ENCODE measurements at regions of chr7 and their contacts with region 1.

Region 1: GRCh38 chr7:150404805-150405583 is 25.9 kb downstream of the ZNF775 start:
- DNase-seq: peak; percentile 93
- ATAC-seq: peak; percentile 50
- H3K4me3 ChIP-seq: peak overlapping the region; percentile 61 to 90 (median 74)
- H3K4me3 Mint-ChIP-seq: peak overlapping the region; percentile 97
- H3K27ac ChIP-seq: peak overlapping the region; percentile 93 to 97
- H3K27ac Mint-ChIP-seq: peak overlapping the region; percentile 100
- H3K4me1 ChIP-seq: peaks cover 49 to 63% of the 10 kb centered on the region in 2 donors
- H3K4me1 Mint-ChIP-seq: peaks cover 62% of the 10 kb centered on the region
- H3K27me3 ChIP-seq: no peaks in the 10 kb centered on the region
- H3K27me3 Mint-ChIP-seq: no peaks in the 10 kb centered on the region
- CTCF ChIP-seq: peak; percentile 25

Region 2: GRCh38 chr7:148987010-148987750 is 1417.8 kb before region 1 on chr7:
- CTCF ChIA-PET with region 1: no interaction called
- POLR2A ChIA-PET with region 1: no interaction called
- intact Hi-C with region 1: loop called (anchors 5 kb)
- DNase-seq: peak; percentile 92
- ATAC-seq: peak; percentile 87
- H3K4me3 ChIP-seq: peak overlapping the region; percentile 78 to 98 (median 89)
- H3K4me3 Mint-ChIP-seq: peak overlapping the region; percentile 99
- H3K27ac ChIP-seq: peak overlapping the region; percentile 84 to 90
- H3K27ac Mint-ChIP-seq: peak overlapping the region; percentile 94
- H3K4me1 ChIP-seq: peaks cover 39 to 43% of the 10 kb centered on the region in 2 donors
- H3K4me1 Mint-ChIP-seq: peaks cover 49% of the 10 kb centered on the region
- H3K27me3 ChIP-seq: no peaks in the 10 kb centered on the region
- H3K27me3 Mint-ChIP-seq: no peaks in the 10 kb centered on the region
- CTCF ChIP-seq: no peak

Region 3: GRCh38 chr7:150322833-150323681 is 81.9 kb before region 1 on chr7 and contains the starts of genes ACTR3C and LRRC61:
- CTCF ChIA-PET with region 1: no interaction called
- POLR2A ChIA-PET with region 1: interaction called, 3 read pairs
- intact Hi-C with region 1: loop called (anchors 1 kb)
- DNase-seq: peak; percentile 79
- ATAC-seq: peak; percentile 78
- H3K4me3 ChIP-seq: peak within 1 kb of the TSS; percentile 75 to 94 (median 88)
- H3K4me3 Mint-ChIP-seq: peak within 1 kb of the TSS; percentile 99
- H3K27ac ChIP-seq: peak within 1 kb of the TSS; percentile 82 to 88
- H3K27ac Mint-ChIP-seq: peak within 1 kb of the TSS; percentile 98
- H3K4me1 ChIP-seq: peaks cover 11 to 34% of the 10 kb centered on the region in 2 donors
- H3K4me1 Mint-ChIP-seq: peaks cover 47% of the 10 kb centered on the region
- H3K27me3 ChIP-seq: no peaks in the 10 kb centered on the region
- H3K27me3 Mint-ChIP-seq: no peaks in the 10 kb centered on the region
- CTCF ChIP-seq: no peak
- total RNA-seq, gene ACTR3C: 20.7 TPM in 2 replicates
- total RNA-seq, gene LRRC61: 12.8 and 15.5 TPM in 2 replicates

Region 4: GRCh38 chr7:150368096-150368883 is 36.7 kb before region 1 on chr7 and contains the start of gene REPIN1:
- CTCF ChIA-PET with region 1: interaction called, 71 read pairs
- POLR2A ChIA-PET with region 1: interaction called, 120 read pairs
- intact Hi-C with region 1: loop called (anchors 1 kb)
- DNase-seq: peak; percentile 89
- ATAC-seq: peak; percentile 49
- H3K4me3 ChIP-seq: peak within 1 kb of the TSS; percentile 62 to 98 (median 82)
- H3K4me3 Mint-ChIP-seq: peak within 1 kb of the TSS; percentile 92
- H3K27ac ChIP-seq: peak within 1 kb of the TSS; percentile 98 to 99
- H3K27ac Mint-ChIP-seq: peak within 1 kb of the TSS; percentile 98
- H3K4me1 ChIP-seq: peaks cover 57 to 72% of the 10 kb centered on the region in 2 donors
- H3K4me1 Mint-ChIP-seq: peaks cover 69% of the 10 kb centered on the region
- H3K27me3 ChIP-seq: no peaks in the 10 kb centered on the region
- H3K27me3 Mint-ChIP-seq: no peaks in the 10 kb centered on the region
- CTCF ChIP-seq: no peak
- total RNA-seq, gene REPIN1: 190 and 193 TPM in 2 replicates

Region 5: GRCh38 chr7:150378853-150379440 is 26.0 kb before region 1 on chr7 and contains the start of gene ZNF775:
- CTCF ChIA-PET with region 1: interaction called, 35 read pairs
- POLR2A ChIA-PET with region 1: interaction called, 38 read pairs
- intact Hi-C with region 1: loop called (anchors 1 kb)
- DNase-seq: peak; percentile 93
- ATAC-seq: peak; percentile 91
- H3K4me3 ChIP-seq: peak within 1 kb of the TSS; percentile 45 to 91 (median 77)
- H3K4me3 Mint-ChIP-seq: peak within 1 kb of the TSS; percentile 96
- H3K27ac ChIP-seq: peak within 1 kb of the TSS; percentile 84 to 85
- H3K27ac Mint-ChIP-seq: peak within 1 kb of the TSS; percentile 90
- H3K4me1 ChIP-seq: peaks cover 22 to 59% of the 10 kb centered on the region in 2 donors
- H3K4me1 Mint-ChIP-seq: peaks cover 71% of the 10 kb centered on the region
- H3K27me3 ChIP-seq: no peaks in the 10 kb centered on the region
- H3K27me3 Mint-ChIP-seq: no peaks in the 10 kb centered on the region
- CTCF ChIP-seq: peak; percentile 14
- total RNA-seq, gene ZNF775: 12.1 and 12.5 TPM in 2 replicates

Region 6: GRCh38 chr7:150420987-150421674 is 16.1 kb after region 1 on chr7:
- CTCF ChIA-PET with region 1: interaction called, 7 read pairs
- POLR2A ChIA-PET with region 1: interaction called, 3 read pairs
- intact Hi-C with region 1: loop called (anchors 1 kb)
- DNase-seq: peak; percentile 90
- ATAC-seq: peak; percentile 99
- H3K4me3 ChIP-seq: peak overlapping the region in 1 of 5 experiments; percentile 4
- H3K4me3 Mint-ChIP-seq: peak overlapping the region; percentile 7
- H3K27ac ChIP-seq: no peak overlapping the region
- H3K27ac Mint-ChIP-seq: peak overlapping the region; percentile 51
- H3K4me1 ChIP-seq: peaks cover 0 to 5% of the 10 kb centered on the region in 2 donors
- H3K4me1 Mint-ChIP-seq: peaks cover 5% of the 10 kb centered on the region
- H3K27me3 ChIP-seq: no peaks in the 10 kb centered on the region
- H3K27me3 Mint-ChIP-seq: peaks cover 4% of the 10 kb centered on the region
- CTCF ChIP-seq: peak; percentile 97

Region 7: GRCh38 chr7:150448789-150449147 is 43.8 kb after region 1 on chr7:
- CTCF ChIA-PET with region 1: interaction called, 10 read pairs
- POLR2A ChIA-PET with region 1: no interaction called
- intact Hi-C with region 1: no loop called
- DNase-seq: peak; percentile 83
- ATAC-seq: peak; percentile 84
- H3K4me3 ChIP-seq: no peak overlapping the region
- H3K4me3 Mint-ChIP-seq: peak overlapping the region; percentile 3
- H3K27ac ChIP-seq: no peak overlapping the region
- H3K27ac Mint-ChIP-seq: peak overlapping the region; percentile 54
- H3K4me1 ChIP-seq: peaks cover 29 to 43% of the 10 kb centered on the region in 2 donors
- H3K4me1 Mint-ChIP-seq: peaks cover 44% of the 10 kb centered on the region
- H3K27me3 ChIP-seq: peaks cover 0 to 37% (median 6%) of the 10 kb centered on the region in 4 experiments
- H3K27me3 Mint-ChIP-seq: peaks cover 24% of the 10 kb centered on the region
- CTCF ChIP-seq: peak; percentile 93